ENCODE measurements at regions of chr12 and their contacts with region 1.

Region 1: DNA sequence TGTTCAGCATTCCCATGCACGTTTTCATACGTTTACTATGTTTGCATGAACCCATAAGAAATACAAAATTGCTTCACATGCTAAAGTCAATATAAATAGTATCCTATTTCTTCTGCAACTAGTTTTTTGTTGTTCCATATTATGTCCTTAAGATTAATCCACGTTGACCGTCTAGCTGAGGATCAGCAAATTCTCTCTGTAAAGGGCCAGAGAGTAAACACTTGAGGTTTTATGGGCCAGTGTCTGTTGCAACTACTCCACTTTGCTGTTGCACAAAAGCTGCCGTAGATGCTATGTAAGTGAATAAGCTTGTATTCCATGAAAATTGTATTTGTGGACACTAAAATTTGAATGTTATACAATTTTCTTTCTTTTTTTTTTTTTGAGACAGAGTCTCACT is 21.1 kb upstream of the PITPNM2 start:
- DNase-seq: no peak
- ATAC-seq: no peak
- H3K4me3 ChIP-seq: no peak overlapping the region
- H3K4me3 Mint-ChIP-seq: no peak overlapping the region
- H3K27ac ChIP-seq: no peak overlapping the region
- H3K27ac Mint-ChIP-seq: no peak overlapping the region
- H3K4me1 ChIP-seq: no peaks in the 10 kb centered on the region
- H3K4me1 Mint-ChIP-seq: peaks cover 0 to 4% (median 3%) of the 10 kb centered on the region in 7 donors
- H3K27me3 ChIP-seq: no peaks in the 10 kb centered on the region
- H3K27me3 Mint-ChIP-seq: no peaks in the 10 kb centered on the region

Region 2: GRCh38 chr12:123242116-123242904 is 70.3 kb after region 1 on chr12:
- CTCF ChIA-PET with region 1: no interaction called
- POLR2A ChIA-PET with region 1: no interaction called
- intact Hi-C with region 1: no loop called
- DNase-seq: peak in 6 of 9 donors; percentile 32 to 58 (median 40)
- ATAC-seq: peak; percentile 78
- H3K4me3 ChIP-seq: no peak overlapping the region
- H3K4me3 Mint-ChIP-seq: peak overlapping the region in 9 of 10 donors; percentile 29 to 73 (median 63)
- H3K27ac ChIP-seq: peak overlapping the region; percentile 50
- H3K27ac Mint-ChIP-seq: peak overlapping the region; percentile 77 to 92 (median 84)
- H3K4me1 ChIP-seq: peaks cover 4 to 40% of the 10 kb centered on the region in 2 donors
- H3K4me1 Mint-ChIP-seq: peaks cover 42 to 76% (median 53%) of the 10 kb centered on the region in 7 donors
- H3K27me3 ChIP-seq: no peaks in the 10 kb centered on the region
- H3K27me3 Mint-ChIP-seq: no peaks in the 10 kb centered on the region

Region 3: GRCh38 chr12:123344086-123344485 is 172.1 kb after region 1 on chr12:
- CTCF ChIA-PET with region 1: no interaction called
- POLR2A ChIA-PET with region 1: no interaction called
- intact Hi-C with region 1: loop called in 1 of 2 experiments (anchors 5 kb)
- DNase-seq: no peak
- ATAC-seq: no peak
- H3K4me3 ChIP-seq: no peak overlapping the region
- H3K4me3 Mint-ChIP-seq: no peak overlapping the region
- H3K27ac ChIP-seq: no peak overlapping the region
- H3K27ac Mint-ChIP-seq: no peak overlapping the region
- H3K4me1 ChIP-seq: no peaks in the 10 kb centered on the region
- H3K4me1 Mint-ChIP-seq: peaks cover 0 to 13% (median 5%) of the 10 kb centered on the region in 7 donors
- H3K27me3 ChIP-seq: no peaks in the 10 kb centered on the region
- H3K27me3 Mint-ChIP-seq: no peaks in the 10 kb centered on the region

Measured in naive thymus-derived CD4-positive, alpha-beta T cell (primary cell).